Activated naive CD4-positive, alpha-beta T cell treated with anti-CD3 and anti-CD28 coated beads for 36 hours (primary cell): ENCODE measurements at regions of chr20 and their contacts with region 1.

Region 1: DNA sequence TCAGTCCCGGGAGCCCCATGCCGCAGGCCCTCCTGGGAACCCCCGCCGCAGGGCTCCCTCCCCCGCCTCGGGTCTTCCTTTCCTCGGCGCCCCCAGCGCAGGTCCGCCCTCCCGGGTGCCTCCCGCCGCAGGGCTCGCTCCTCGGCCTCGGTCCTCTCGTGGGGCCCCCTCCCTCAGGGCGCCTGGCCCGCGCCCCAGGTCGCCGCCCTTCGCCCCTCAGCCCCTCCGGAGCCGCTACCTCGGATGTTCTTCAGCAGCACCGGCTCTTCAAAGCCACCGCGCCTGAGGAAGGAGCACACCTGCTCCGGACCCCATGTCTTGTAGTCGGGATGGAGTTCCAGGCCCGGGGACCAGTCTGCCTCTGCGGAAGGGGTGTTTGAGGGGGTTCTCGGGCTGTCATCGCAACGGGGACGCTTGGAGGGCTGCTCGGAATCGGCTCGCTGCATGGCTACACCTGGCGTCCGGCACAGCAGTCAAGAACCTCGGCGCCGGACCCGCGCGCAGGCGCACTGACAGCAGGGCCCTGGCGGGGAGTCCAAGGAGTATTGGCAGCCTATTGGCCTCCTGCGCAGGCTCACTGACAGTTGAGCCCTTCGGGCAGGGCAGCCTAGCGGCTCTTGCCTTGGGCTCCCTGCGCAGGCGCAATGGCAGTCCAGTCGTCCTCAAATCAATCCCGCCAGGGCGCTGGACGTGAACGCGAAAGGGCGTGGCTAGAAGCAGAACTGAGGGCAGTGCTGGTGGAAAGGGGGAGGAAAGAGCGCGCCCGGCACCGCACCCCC is at the start of gene SAMHD1:
- DNase-seq: peak; percentile 89
- H3K4me3 Mint-ChIP-seq: peak within 1 kb of the TSS; percentile 96
- H3K27ac Mint-ChIP-seq: peak within 1 kb of the TSS; percentile 92
- H3K4me1 Mint-ChIP-seq: peaks cover 39% of the 10 kb centered on the region
- H3K27me3 Mint-ChIP-seq: no peaks in the 10 kb centered on the region
- total RNA-seq, gene SAMHD1: 29.9 to 33.5 TPM

Region 2: GRCh38 chr20:37178839-37179670 is 227.7 kb after region 1 on chr20 and contains the starts of genes MROH8 and RPN2:
- CTCF ChIA-PET with region 1: no interaction called
- intact Hi-C with region 1: loop called (anchors 2 kb)
- DNase-seq: peak; percentile 98
- H3K4me3 Mint-ChIP-seq: peak within 1 kb of the TSS; percentile 94
- H3K27ac Mint-ChIP-seq: peak within 1 kb of the TSS; percentile 97
- H3K4me1 Mint-ChIP-seq: peaks cover 37% of the 10 kb centered on the region
- H3K27me3 Mint-ChIP-seq: no peaks in the 10 kb centered on the region
- total RNA-seq, gene MROH8: 0.54 to 0.91 TPM
- total RNA-seq, gene RPN2: 102 to 104 TPM